Activated CD4-positive, alpha-beta memory T cell treated with anti-CD3 and anti-CD28 coated beads for 36 hours (primary cell): ENCODE measurements at regions of chr4 and their contacts with region 1.

Region 1: DNA sequence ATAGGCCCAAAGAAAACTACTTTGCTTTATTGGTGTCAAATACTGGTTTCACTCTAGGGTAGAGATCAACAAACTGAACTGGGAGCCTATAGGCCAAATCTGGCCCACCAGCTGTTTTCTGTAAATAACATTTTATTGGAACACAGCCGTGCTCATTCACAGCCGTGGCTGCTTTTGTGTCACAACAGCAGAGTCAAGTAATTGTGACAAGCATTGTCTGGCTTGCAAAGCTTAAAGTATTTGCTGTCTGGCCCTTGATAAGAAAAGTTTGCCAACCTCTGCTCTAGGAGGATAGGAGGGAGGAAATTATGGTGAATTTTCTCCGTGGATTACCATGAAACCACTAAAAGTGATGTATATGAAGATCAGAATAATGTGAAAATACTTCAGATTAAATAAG is 53.4 kb downstream of the GPAT3 start:
- DNase-seq: no peak
- H3K4me3 Mint-ChIP-seq: no peak overlapping the region
- H3K27ac Mint-ChIP-seq: no peak overlapping the region
- H3K4me1 Mint-ChIP-seq: no peaks in the 10 kb centered on the region
- H3K27me3 Mint-ChIP-seq: no peaks in the 10 kb centered on the region

Region 2: DNA sequence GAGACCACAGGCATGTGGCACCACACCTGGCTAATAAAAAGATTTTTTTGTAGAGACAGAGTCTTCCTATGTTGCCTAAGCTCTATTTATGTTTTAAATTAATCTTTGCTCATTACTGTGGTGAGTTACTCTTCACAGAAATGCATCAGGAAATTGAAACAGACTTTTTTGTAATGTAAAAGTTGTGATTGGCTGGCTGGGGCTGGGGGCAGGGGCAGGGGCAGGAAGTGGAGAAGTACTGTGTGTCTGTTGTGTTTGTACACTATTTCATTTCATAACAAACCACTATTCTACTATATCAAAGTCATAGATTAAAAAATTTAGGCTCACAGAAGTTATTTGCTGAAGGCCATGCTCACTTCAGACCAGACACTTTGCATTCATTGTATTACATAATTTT is 85.3 kb before region 1 on chr4:
- CTCF ChIA-PET with region 1: no interaction called
- POLR2A ChIA-PET with region 1: no interaction called
- intact Hi-C with region 1: loop called (anchors 5 kb)
- DNase-seq: peak; percentile 41
- H3K4me3 Mint-ChIP-seq: no peak overlapping the region
- H3K27ac Mint-ChIP-seq: no peak overlapping the region
- H3K4me1 Mint-ChIP-seq: peaks cover 8% of the 10 kb centered on the region
- H3K27me3 Mint-ChIP-seq: no peaks in the 10 kb centered on the region

Region 3: GRCh38 chr4:84017128-84017527 is 427.8 kb after region 1 on chr4:
- CTCF ChIA-PET with region 1: no interaction called
- POLR2A ChIA-PET with region 1: no interaction called
- intact Hi-C with region 1: no loop called
- DNase-seq: no peak
- H3K4me3 Mint-ChIP-seq: no peak overlapping the region
- H3K27ac Mint-ChIP-seq: no peak overlapping the region
- H3K4me1 Mint-ChIP-seq: no peaks in the 10 kb centered on the region
- H3K27me3 Mint-ChIP-seq: no peaks in the 10 kb centered on the region